Cardiac septum (tissue), 1 donor: ENCODE measurements at regions of chr20 and their contacts with region 1.

Region 1: GRCh38 chr20:41599699-41600104 is 18.5 kb downstream of the CHD6 start:
- DNase-seq: no peak

Region 2: DNA sequence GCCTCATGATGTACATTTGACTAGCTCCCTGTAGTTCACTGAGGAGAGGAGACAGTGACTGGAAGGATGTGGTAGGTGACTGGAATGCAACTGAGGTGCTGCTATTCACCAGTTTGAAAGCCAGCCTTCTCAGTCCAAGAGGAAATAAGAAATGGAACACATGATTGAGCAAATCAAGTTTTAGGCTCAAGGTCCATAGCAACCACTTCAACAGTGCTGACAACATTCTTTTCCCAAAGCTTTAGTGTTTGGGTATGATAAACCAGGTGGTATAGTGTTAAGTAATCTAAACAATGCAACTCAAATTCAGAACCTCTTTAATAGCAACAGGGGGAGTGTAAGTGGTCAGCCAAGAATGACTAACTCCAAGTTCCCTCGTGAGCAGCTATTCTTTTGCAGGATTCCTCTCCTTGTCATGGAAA is 291.4 kb before region 1 on chr20:
- intact Hi-C with region 1: no loop called
- DNase-seq: no peak

Region 3: GRCh38 chr20:41509316-41510200 is 90.1 kb before region 1 on chr20:
- intact Hi-C with region 1: loop called (anchors 5 kb)
- DNase-seq: no peak

Region 4: GRCh38 chr20:41553142-41553880 is 46.4 kb before region 1 on chr20:
- intact Hi-C with region 1: no loop called
- DNase-seq: no peak